ENCODE measurements at regions of chr20 and their contacts with region 1.

Region 1: GRCh38 chr20:24211972-24212371 is 223.4 kb upstream of the GGTLC1 start:
- DNase-seq: no peak
- ATAC-seq: no peak
- H3K4me3 Mint-ChIP-seq: no peak overlapping the region
- H3K27ac Mint-ChIP-seq: no peak overlapping the region
- H3K4me1 Mint-ChIP-seq: no peaks in the 10 kb centered on the region
- H3K27me3 Mint-ChIP-seq: peaks cover 30% of the 10 kb centered on the region

Region 2: DNA sequence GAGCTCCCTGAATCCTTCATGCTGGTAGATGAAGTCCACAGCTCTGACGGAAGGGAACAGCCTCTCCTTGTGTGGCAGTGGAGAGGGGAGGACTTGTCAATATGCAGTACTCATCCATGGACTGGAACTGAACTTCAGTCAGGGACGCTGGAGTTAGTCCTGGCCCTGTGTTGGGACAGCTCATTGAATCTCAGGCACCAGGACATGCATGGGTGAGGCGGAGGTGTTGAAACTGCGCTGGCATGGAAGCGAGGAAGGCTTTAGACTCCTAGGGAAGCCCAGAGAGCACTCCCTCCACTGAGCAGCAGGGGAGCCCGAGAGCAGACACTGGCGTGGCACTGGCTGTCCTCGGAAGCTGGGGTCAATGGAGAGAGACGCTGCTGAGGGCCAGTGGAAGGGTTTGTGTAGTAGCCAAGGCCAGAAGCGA is 62.1 kb before region 1 on chr20:
- CTCF ChIA-PET with region 1: no interaction called
- POLR2A ChIA-PET with region 1: no interaction called
- intact Hi-C with region 1: loop called in 1 of 2 experiments (anchors 10 kb)
- DNase-seq: peak; percentile 25
- ATAC-seq: peak; percentile 44
- H3K4me3 Mint-ChIP-seq: no peak overlapping the region
- H3K27ac Mint-ChIP-seq: no peak overlapping the region
- H3K4me1 Mint-ChIP-seq: no peaks in the 10 kb centered on the region
- H3K27me3 Mint-ChIP-seq: peaks cover 1% of the 10 kb centered on the region

Measured in activated CD4-positive, alpha-beta T cell treated with anti-CD3 and anti-CD28 coated beads for 36 hours (primary cell).